HCT116 (cell line): ENCODE measurements at regions of chr2 and their contacts with region 1.

Region 1: DNA sequence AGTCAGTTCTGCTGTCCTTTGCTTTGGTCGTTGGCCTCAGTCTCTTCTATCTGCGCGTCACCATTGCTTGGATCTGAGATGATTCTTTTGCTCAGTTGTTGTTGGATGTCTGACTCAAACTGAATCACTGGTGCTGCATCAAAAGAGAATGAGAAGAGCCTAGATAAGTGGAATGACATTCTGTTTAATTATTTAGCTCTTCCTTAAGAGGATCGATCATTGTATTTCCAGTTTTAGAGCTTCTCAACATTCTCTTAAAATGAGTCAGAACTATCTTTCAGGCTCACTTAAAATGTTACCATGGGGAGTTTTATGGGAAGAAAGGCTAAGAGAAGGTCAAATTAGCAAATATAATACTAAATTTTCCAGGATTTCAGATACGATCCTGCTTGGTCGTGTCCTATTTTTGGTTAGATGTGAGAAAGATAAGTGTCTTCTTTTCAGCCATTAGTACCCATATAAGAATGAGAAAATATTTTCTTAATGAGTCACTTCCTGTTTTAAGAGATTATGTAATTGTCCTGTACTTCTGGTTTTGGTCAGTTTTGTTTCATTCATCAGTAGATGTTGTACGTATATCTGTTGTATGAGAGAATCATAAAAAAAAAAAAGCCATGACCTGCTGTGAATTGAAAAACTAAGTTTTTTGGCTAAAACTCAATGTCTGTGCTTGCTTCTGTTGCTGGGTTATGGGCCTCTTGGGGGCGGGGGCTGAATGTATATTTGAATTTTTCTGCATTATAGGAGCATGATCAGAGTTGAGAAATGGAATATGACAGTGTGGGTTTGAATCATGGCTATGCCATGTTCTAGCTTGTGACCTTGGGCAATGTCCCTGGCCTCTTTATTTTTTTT is 31.6 kb upstream of the CASP10 start:
- DNase-seq: peak; percentile 86
- ATAC-seq: peak; percentile 60
- H3K4me3 ChIP-seq: peak overlapping the region; percentile 13 to 41
- H3K27ac ChIP-seq: peak overlapping the region; percentile 98
- H3K4me1 ChIP-seq: peaks cover 40 to 68% of the 10 kb centered on the region in 2 experiments
- H3K27me3 ChIP-seq: no peaks in the 10 kb centered on the region
- CTCF ChIP-seq: no peak
- POLR2A ChIP-seq: no peak
- RAD21 ChIP-seq: no peak; the same call in 1 of the 2 replicates

Region 2: GRCh38 chr2:201084863-201085262 is 66.5 kb before region 1 on chr2:
- CTCF ChIA-PET with region 1: no interaction called
- POLR2A ChIA-PET with region 1: no interaction called
- RAD21 ChIA-PET with region 1: no interaction called
- intact Hi-C with region 1: no loop called
- DNase-seq: no peak
- ATAC-seq: no peak
- H3K4me3 ChIP-seq: no peak overlapping the region
- H3K27ac ChIP-seq: no peak overlapping the region
- H3K4me1 ChIP-seq: peaks cover 0 to 4% of the 10 kb centered on the region in 2 experiments; a peak in 2 of 4 replicates
- H3K27me3 ChIP-seq: no peaks in the 10 kb centered on the region
- CTCF ChIP-seq: no peak
- POLR2A ChIP-seq: no peak
- RAD21 ChIP-seq: no peak

Region 3: GRCh38 chr2:201118121-201118960 is 33.0 kb before region 1 on chr2:
- CTCF ChIA-PET with region 1: interaction called, 6 read pairs
- POLR2A ChIA-PET with region 1: interaction called, 8 read pairs
- RAD21 ChIA-PET with region 1: no interaction called
- intact Hi-C with region 1: loop called (anchors 2 kb)
- DNase-seq: peak; percentile 86
- ATAC-seq: peak; percentile 66
- H3K4me3 ChIP-seq: peak overlapping the region; percentile 81
- H3K27ac ChIP-seq: peak overlapping the region; percentile 96
- H3K4me1 ChIP-seq: peaks cover 18 to 75% of the 10 kb centered on the region in 2 experiments
- H3K27me3 ChIP-seq: no peaks in the 10 kb centered on the region
- CTCF ChIP-seq: peak; percentile 50 to 93 (median 57); a peak in 5 of 6 replicates
- POLR2A ChIP-seq: no peak
- RAD21 ChIP-seq: peak; percentile 70

Region 4: GRCh38 chr2:201130524-201131186 is 20.7 kb before region 1 on chr2:
- CTCF ChIA-PET with region 1: no interaction called
- POLR2A ChIA-PET with region 1: no interaction called
- RAD21 ChIA-PET with region 1: no interaction called
- intact Hi-C with region 1: no loop called
- DNase-seq: no peak
- ATAC-seq: peak; percentile 44; the same call in 1 of the 2 replicates
- H3K4me3 ChIP-seq: no peak overlapping the region
- H3K27ac ChIP-seq: no peak overlapping the region
- H3K4me1 ChIP-seq: peaks cover 6 to 53% of the 10 kb centered on the region in 2 experiments; a peak in 3 of 4 replicates
- H3K27me3 ChIP-seq: no peaks in the 10 kb centered on the region
- CTCF ChIP-seq: no peak
- POLR2A ChIP-seq: no peak
- RAD21 ChIP-seq: no peak

Region 5: DNA sequence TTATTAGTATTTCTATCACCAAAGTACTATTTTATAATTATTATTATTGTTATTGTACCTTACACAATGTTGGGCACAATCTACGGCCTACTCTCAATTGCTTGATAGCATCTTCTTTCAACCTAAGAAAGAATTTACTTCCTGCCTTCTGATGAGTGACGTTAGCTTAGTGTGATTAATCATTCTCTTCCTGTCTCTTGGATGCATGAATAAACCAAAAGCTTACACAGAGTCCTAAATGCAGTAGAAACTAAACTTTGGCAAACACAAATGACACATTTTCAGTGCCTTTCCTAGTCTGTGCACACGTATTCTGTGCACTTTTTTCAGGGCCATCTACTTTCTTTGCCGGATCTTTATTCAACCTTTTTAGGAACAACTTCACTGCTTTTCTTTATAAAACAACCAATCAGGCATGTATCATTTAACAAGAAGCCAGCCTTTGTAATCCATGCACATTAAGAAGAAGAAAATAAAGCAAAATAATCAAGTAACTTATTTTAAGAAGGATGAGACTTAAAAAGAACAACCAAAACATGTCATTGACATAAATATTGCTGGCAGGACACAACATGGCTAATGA is 280.8 kb after region 1 on chr2:
- CTCF ChIA-PET with region 1: no interaction called
- POLR2A ChIA-PET with region 1: no interaction called
- RAD21 ChIA-PET with region 1: no interaction called
- intact Hi-C with region 1: no loop called
- DNase-seq: no peak
- ATAC-seq: no peak
- H3K4me3 ChIP-seq: no peak overlapping the region
- H3K27ac ChIP-seq: no peak overlapping the region
- H3K4me1 ChIP-seq: no peaks in the 10 kb centered on the region
- H3K27me3 ChIP-seq: no peaks in the 10 kb centered on the region
- CTCF ChIP-seq: no peak
- POLR2A ChIP-seq: no peak
- RAD21 ChIP-seq: no peak